ENCODE measurements at regions of chr1 and their contacts with region 1.

Region 1: DNA sequence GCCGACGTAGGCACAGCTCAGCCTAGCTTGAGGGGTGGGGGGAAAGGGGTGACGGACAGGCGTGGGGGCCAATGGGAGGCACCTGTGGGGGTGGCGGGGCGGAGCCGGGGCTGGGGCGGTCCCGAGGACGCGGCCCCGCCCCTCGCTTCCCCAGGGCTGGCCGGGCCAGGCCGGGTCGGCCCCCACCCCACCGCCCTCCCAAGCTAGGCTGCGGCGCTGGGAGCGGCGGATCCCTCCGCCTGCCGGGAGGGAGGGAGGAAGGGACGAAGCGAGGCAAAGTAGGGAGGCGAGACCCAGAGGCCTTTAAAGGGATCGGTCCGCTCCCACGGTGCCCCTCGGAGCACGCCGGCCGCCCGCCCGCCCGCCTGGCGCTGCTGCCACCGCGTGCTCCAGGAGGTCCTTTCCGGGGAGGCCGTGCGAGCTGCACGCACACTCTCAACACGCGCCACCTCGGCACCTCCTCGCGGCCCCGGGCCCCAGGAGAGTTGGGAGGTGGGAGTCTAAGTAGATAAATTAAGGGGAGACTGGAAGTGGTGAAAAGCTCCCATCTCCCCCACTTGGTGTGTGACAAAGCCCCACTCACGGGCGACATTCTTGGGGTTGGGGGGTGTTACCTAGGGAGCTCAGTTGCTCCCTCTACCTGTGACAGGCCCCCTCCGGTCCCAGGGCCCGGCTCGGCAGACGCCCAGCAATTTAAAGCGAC is 373 bp upstream of the MEF2D start:
- DNase-seq: peak; percentile 91 to 98 (median 94)
- ATAC-seq: peak; percentile 67 to 71
- H3K4me3 Mint-ChIP-seq: peak overlapping the region; percentile 78 to 98 (median 92)
- H3K27ac Mint-ChIP-seq: peak overlapping the region; percentile 95 to 100 (median 99)
- H3K4me1 Mint-ChIP-seq: peaks cover 47 to 76% (median 74%) of the 10 kb centered on the region in 4 donors
- H3K27me3 Mint-ChIP-seq: peaks cover 0 to 5% (median 0%) of the 10 kb centered on the region in 5 donors

Region 2: GRCh38 chr1:155983191-155984024 is 517.5 kb before region 1 on chr1:
- POLR2A ChIA-PET with region 1: no interaction called
- DNase-seq: no peak
- ATAC-seq: no peak
- H3K4me3 Mint-ChIP-seq: peak overlapping the region in 6 of 10 donors; percentile 14 to 33 (median 21)
- H3K27ac Mint-ChIP-seq: peak overlapping the region; percentile 49 to 97 (median 84)
- H3K4me1 Mint-ChIP-seq: peaks cover 24 to 59% (median 54%) of the 10 kb centered on the region in 4 donors
- H3K27me3 Mint-ChIP-seq: no peaks in the 10 kb centered on the region

Region 3: DNA sequence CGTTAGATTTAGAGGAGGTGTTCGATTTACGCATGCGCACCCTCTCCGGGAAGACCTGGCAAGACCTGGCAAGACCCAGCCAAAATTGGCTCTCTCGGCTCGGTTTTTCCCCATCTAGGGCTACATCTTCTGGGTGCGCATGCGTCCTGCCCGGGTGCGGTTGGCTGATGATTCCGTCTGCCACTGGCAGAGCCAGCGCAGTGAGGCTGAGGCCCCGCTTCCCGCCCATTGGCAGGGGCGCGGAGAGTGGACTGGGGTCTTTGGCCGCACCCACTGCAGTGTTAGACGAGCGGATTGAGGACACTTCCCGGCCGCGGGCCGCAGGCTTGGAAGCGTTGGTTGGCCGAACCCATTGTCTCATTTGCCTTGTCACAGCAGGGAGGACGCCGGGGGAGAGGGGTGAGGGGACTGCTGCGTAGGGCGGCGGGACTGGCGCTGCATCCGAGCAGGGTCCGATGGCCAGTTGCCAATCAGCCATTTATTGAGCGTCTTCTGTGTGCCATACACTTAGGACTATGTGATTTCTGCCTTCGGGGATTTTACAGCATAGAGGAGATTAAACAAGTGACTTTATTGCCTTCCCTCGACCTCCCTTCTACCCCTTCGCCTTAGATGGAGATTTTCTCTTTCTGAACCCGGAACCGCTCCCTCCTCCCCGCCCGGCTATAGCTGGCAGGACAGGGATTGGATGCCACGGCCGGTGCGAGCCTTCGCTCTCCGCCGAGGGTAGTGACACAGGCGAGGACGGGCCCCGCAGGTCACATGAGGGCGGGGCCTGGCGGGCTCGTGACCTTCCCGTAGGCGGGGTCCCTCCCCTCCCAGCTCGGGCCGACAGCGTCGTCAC is 44.1 kb before region 1 on chr1:
- POLR2A ChIA-PET with region 1: interaction called, 72 read pairs
- DNase-seq: peak; percentile 94 to 99 (median 96)
- ATAC-seq: peak; percentile 79 to 83
- H3K4me3 Mint-ChIP-seq: peak overlapping the region; percentile 89 to 97 (median 95)
- H3K27ac Mint-ChIP-seq: peak overlapping the region; percentile 94 to 100 (median 100)
- H3K4me1 Mint-ChIP-seq: peaks cover 16 to 18% (median 17%) of the 10 kb centered on the region in 4 donors
- H3K27me3 Mint-ChIP-seq: no peaks in the 10 kb centered on the region

Region 4: GRCh38 chr1:156480411-156481192 is 20.3 kb before region 1 on chr1:
- POLR2A ChIA-PET with region 1: interaction called, 359 read pairs
- DNase-seq: peak; percentile 66 to 91 (median 80)
- ATAC-seq: peak; percentile 86 to 93
- H3K4me3 Mint-ChIP-seq: peak overlapping the region; percentile 0 to 67 (median 52)
- H3K27ac Mint-ChIP-seq: peak overlapping the region; percentile 84 to 99 (median 94)
- H3K4me1 Mint-ChIP-seq: peaks cover 24 to 55% (median 55%) of the 10 kb centered on the region in 4 donors
- H3K27me3 Mint-ChIP-seq: no peaks in the 10 kb centered on the region

Region 5: DNA sequence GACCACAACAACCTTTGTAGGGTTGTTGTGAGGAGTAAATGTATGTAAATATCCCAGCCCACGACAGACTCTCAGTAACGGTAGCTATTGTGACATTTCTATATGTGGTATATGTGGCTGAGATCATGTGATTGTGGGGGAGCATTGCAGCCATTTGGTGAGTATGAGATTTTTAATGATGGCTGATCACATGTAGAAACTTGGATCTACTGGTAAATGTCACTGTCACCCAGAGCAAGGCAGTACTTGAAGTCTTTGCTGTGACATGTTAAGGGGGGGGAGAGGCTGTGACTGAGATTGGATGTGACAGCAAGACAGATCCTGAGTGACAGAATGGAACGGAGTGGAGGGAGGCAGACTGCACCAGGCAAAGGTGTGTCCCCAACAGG is 23.5 kb after region 1 on chr1:
- POLR2A ChIA-PET with region 1: interaction called, 34 read pairs
- DNase-seq: peak in 5 of 10 donors; percentile 13 to 62 (median 40)
- ATAC-seq: peak; percentile 69 to 77
- H3K4me3 Mint-ChIP-seq: peak overlapping the region; percentile 64 to 82 (median 72)
- H3K27ac Mint-ChIP-seq: peak overlapping the region; percentile 12 to 89 (median 77)
- H3K4me1 Mint-ChIP-seq: peaks cover 29 to 48% (median 46%) of the 10 kb centered on the region in 4 donors
- H3K27me3 Mint-ChIP-seq: no peaks in the 10 kb centered on the region

Region 6: DNA sequence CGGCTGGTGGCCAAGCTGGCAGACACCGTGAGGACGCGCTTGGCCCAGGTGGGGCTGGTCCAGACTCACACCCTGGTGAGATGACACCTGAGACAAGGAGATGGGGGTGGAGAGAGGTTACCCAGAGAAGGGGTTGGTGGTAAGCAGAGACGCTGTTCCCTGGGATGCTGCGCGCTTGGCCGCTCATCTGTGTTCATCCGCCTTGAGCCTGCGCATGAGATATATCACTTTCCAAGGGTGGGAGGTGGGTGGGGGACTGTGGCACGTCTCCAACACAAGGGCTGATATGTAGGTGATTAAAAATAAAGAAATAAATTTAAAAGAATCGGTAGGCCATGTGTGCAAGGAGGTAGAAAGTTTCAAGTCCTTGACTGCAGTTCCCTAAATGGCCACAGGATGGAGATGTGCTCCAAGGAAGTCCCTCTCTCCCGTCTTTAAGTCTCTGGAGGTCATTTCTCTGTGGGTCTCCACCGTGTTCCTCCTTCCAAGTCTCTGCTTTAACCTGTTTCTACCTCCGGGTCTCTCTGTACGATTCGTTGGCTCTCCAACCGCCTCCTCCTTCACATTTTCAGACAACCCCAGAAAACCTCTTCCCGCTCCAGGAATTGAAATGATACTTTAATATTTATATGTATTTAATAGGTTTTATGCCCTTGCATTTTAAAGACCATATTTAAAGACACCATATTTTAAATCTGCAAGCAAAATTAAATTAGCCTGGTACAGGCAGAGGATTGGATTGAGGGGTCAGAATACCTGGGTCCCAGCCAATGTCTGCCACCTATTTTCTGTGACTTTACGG is 83.1 kb after region 1 on chr1:
- POLR2A ChIA-PET with region 1: interaction called, 163 read pairs
- DNase-seq: peak; percentile 54 to 87 (median 70)
- ATAC-seq: no peak
- H3K4me3 Mint-ChIP-seq: peak overlapping the region; percentile 72 to 99 (median 96)
- H3K27ac Mint-ChIP-seq: peak overlapping the region; percentile 88 to 100 (median 96)
- H3K4me1 Mint-ChIP-seq: peaks cover 23 to 53% (median 42%) of the 10 kb centered on the region in 4 donors
- H3K27me3 Mint-ChIP-seq: no peaks in the 10 kb centered on the region